ENCODE measurements at regions of chr22 and their contacts with region 1.

Region 1: DNA sequence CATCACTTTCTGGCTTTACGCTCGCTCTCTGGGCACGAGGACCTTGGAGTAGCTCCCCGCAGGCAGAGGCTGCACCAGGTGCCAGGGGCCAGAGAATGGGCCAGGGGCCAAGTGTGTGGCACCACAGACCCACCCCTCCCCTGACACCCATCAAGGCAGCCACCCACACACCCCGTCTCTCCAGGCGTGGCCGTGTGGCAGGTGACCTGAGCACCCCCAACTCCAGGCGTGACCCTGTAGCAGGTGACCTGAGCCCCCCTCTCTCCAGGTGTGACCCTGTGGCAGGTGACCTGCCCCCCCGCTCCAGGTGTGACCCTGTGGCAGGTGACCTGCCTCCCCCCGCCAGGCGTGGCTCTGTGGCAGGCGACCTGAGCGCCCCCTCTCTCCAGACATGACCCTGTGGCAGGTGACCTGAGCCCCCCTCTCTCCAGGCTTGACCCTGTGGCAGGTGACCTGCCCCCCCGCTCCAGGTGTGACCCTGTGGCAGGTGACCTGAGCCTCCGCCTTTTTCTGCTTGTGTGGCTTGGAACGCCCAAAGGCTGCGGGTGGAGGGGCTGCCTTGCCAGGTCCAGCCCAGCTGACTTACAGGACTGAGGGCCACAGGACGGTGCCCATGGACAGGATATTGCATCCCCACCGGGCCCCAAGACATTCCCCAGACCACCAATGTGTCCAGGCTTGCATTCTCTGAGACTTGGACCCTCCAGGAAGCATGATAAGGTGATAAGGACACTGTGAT is 667.2 kb downstream of the BRD1 start:
- DNase-seq: peak; percentile 58

Region 2: GRCh38 chr22:48188231-48188721 is 972.2 kb before region 1 on chr22:
- intact Hi-C with region 1: no loop called
- DNase-seq: no peak

Region 3: GRCh38 chr22:48665311-48665995 is 495.0 kb before region 1 on chr22:
- intact Hi-C with region 1: loop called in 1 of 2 experiments (anchors 5 kb)
- DNase-seq: no peak

Region 4: DNA sequence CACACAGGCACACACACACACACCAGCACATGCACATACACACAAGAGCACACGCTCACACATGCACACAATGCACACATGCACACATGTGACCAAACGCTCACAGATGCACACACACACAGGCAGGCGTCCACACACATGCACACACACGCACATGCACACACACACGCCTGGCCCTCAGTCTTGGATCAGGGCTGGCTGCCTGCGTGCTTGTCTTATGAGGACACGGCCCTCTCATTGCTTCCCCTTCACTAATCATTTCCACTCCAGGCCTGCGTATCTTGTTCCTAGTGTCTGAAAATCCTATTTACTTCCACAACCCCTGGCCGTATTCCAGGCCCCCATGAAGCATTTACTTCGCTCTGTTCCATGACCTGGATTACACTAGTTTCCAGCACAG is 73.2 kb before region 1 on chr22:
- intact Hi-C with region 1: loop called in 1 of 2 experiments (anchors 10 kb)
- DNase-seq: peak; percentile 60

Measured in posterior vena cava (tissue), 2 donors.